ENCODE measurements at regions of chr16 and their contacts with region 1.

Region 1: GRCh38 chr16:10918294-10919002 is 23.8 kb downstream of the DEXI start:
- DNase-seq: peak; percentile 86
- H3K4me3 Mint-ChIP-seq: no peak overlapping the region
- H3K27ac Mint-ChIP-seq: no peak overlapping the region
- H3K4me1 Mint-ChIP-seq: peaks cover 13% of the 10 kb centered on the region
- H3K27me3 Mint-ChIP-seq: no peaks in the 10 kb centered on the region

Region 2: GRCh38 chr16:10737068-10737625 is 181.3 kb before region 1 on chr16:
- CTCF ChIA-PET with region 1: interaction called, 39 read pairs
- POLR2A ChIA-PET with region 1: no interaction called
- DNase-seq: peak; percentile 78
- H3K4me3 Mint-ChIP-seq: peak overlapping the region; percentile 28
- H3K27ac Mint-ChIP-seq: peak overlapping the region; percentile 41
- H3K4me1 Mint-ChIP-seq: peaks cover 48% of the 10 kb centered on the region
- H3K27me3 Mint-ChIP-seq: no peaks in the 10 kb centered on the region

Region 3: GRCh38 chr16:10770907-10771306 is 147.5 kb before region 1 on chr16:
- CTCF ChIA-PET with region 1: interaction called, 13 read pairs
- POLR2A ChIA-PET with region 1: interaction called, 3 read pairs
- DNase-seq: no peak
- H3K4me3 Mint-ChIP-seq: no peak overlapping the region
- H3K27ac Mint-ChIP-seq: no peak overlapping the region
- H3K4me1 Mint-ChIP-seq: peaks cover 26% of the 10 kb centered on the region
- H3K27me3 Mint-ChIP-seq: peaks cover 18% of the 10 kb centered on the region

Region 4: DNA sequence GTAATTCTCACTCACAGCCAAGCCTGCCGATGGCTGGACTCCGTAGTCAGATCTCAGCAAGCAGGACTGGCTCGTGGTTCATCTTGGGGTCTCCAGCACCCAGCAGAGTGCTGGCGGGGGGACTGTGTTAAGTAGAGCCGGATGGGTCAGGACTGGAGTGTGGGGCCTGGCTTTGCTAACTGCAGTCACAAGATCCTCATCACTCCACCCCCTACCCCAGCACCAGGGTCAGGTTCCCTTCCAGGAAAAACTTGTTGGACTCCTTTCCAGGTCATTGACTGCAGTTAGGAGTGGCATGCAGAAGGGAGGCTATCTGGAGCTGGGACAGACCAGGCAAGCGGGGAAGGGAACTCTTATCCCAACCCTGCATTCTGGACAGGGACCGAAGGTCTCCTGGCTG is 35.4 kb before region 1 on chr16:
- CTCF ChIA-PET with region 1: interaction called, 12 read pairs
- POLR2A ChIA-PET with region 1: interaction called, 6 read pairs
- DNase-seq: no peak
- H3K4me3 Mint-ChIP-seq: no peak overlapping the region
- H3K27ac Mint-ChIP-seq: no peak overlapping the region
- H3K4me1 Mint-ChIP-seq: peaks cover 76% of the 10 kb centered on the region
- H3K27me3 Mint-ChIP-seq: no peaks in the 10 kb centered on the region

Region 5: GRCh38 chr16:10937068-10937859 is 18.8 kb after region 1 on chr16:
- CTCF ChIA-PET with region 1: interaction called, 11 read pairs
- POLR2A ChIA-PET with region 1: interaction called, 5 read pairs
- DNase-seq: peak; percentile 25
- H3K4me3 Mint-ChIP-seq: peak overlapping the region; percentile 51
- H3K27ac Mint-ChIP-seq: peak overlapping the region; percentile 45
- H3K4me1 Mint-ChIP-seq: peaks cover 83% of the 10 kb centered on the region
- H3K27me3 Mint-ChIP-seq: no peaks in the 10 kb centered on the region

Region 6: GRCh38 chr16:10957771-10958486 is 39.5 kb after region 1 on chr16:
- CTCF ChIA-PET with region 1: no interaction called
- POLR2A ChIA-PET with region 1: no interaction called
- DNase-seq: peak; percentile 38
- H3K4me3 Mint-ChIP-seq: no peak overlapping the region
- H3K27ac Mint-ChIP-seq: peak overlapping the region; percentile 71
- H3K4me1 Mint-ChIP-seq: peaks cover 74% of the 10 kb centered on the region
- H3K27me3 Mint-ChIP-seq: no peaks in the 10 kb centered on the region

Region 7: GRCh38 chr16:11056090-11056992 is 137.9 kb after region 1 on chr16:
- CTCF ChIA-PET with region 1: no interaction called
- POLR2A ChIA-PET with region 1: no interaction called
- DNase-seq: no peak
- H3K4me3 Mint-ChIP-seq: no peak overlapping the region
- H3K27ac Mint-ChIP-seq: peak overlapping the region; percentile 73
- H3K4me1 Mint-ChIP-seq: peaks cover 68% of the 10 kb centered on the region
- H3K27me3 Mint-ChIP-seq: no peaks in the 10 kb centered on the region